CD4-positive, alpha-beta T cell (primary cell): ENCODE measurements at regions of chr11 and their contacts with region 1.

Region 1: DNA sequence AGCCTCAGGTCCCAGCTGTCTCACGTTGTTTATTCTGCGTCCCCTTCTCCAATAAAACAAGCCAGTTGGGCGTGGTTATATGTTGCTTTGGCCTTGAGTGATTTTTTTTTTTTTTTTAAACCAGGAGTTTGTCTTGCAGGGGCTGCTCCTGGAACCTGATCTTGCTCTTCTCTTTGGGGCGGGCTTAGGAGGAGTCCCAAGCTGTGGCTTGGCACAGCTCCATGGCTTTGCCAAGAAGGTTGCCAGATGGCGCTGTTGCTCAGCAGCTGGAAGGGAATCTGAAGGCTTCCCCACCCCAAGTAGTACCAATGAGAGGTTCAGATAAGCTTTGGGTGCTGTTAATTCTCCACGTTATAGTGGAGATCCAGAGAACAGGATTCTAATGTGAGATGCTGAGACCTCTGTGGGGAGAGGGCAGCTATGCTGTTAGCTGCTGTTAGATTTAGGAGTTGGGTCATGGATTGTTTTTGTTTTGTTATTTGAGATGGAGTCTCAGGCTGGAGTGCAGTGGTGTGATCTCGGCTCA is 2.0 kb upstream of the FERMT3 start:
- DNase-seq: peak; percentile 77 to 95 (median 84)
- ATAC-seq: peak; percentile 63
- H3K4me3 ChIP-seq: no peak overlapping the region
- H3K4me3 Mint-ChIP-seq: peak overlapping the region; percentile 93
- H3K27ac ChIP-seq: no peak overlapping the region
- H3K27ac Mint-ChIP-seq: peak overlapping the region; percentile 78
- H3K4me1 ChIP-seq: peaks cover 50% of the 10 kb centered on the region
- H3K4me1 Mint-ChIP-seq: peaks cover 49% of the 10 kb centered on the region
- H3K27me3 ChIP-seq: no peaks in the 10 kb centered on the region
- H3K27me3 Mint-ChIP-seq: no peaks in the 10 kb centered on the region
- CTCF ChIP-seq: peak; percentile 69

Region 2: GRCh38 chr11:64216879-64217278 is 12.4 kb after region 1 on chr11:
- CTCF ChIA-PET with region 1: interaction called, 4 read pairs
- POLR2A ChIA-PET with region 1: interaction called, 116 read pairs
- intact Hi-C with region 1: no loop called
- DNase-seq: no peak
- ATAC-seq: no peak
- H3K4me3 ChIP-seq: no peak overlapping the region
- H3K4me3 Mint-ChIP-seq: no peak overlapping the region
- H3K27ac ChIP-seq: no peak overlapping the region
- H3K27ac Mint-ChIP-seq: no peak overlapping the region
- H3K4me1 ChIP-seq: peaks cover 2% of the 10 kb centered on the region
- H3K4me1 Mint-ChIP-seq: peaks cover 8% of the 10 kb centered on the region
- H3K27me3 ChIP-seq: no peaks in the 10 kb centered on the region
- H3K27me3 Mint-ChIP-seq: no peaks in the 10 kb centered on the region
- CTCF ChIP-seq: no peak

Region 3: DNA sequence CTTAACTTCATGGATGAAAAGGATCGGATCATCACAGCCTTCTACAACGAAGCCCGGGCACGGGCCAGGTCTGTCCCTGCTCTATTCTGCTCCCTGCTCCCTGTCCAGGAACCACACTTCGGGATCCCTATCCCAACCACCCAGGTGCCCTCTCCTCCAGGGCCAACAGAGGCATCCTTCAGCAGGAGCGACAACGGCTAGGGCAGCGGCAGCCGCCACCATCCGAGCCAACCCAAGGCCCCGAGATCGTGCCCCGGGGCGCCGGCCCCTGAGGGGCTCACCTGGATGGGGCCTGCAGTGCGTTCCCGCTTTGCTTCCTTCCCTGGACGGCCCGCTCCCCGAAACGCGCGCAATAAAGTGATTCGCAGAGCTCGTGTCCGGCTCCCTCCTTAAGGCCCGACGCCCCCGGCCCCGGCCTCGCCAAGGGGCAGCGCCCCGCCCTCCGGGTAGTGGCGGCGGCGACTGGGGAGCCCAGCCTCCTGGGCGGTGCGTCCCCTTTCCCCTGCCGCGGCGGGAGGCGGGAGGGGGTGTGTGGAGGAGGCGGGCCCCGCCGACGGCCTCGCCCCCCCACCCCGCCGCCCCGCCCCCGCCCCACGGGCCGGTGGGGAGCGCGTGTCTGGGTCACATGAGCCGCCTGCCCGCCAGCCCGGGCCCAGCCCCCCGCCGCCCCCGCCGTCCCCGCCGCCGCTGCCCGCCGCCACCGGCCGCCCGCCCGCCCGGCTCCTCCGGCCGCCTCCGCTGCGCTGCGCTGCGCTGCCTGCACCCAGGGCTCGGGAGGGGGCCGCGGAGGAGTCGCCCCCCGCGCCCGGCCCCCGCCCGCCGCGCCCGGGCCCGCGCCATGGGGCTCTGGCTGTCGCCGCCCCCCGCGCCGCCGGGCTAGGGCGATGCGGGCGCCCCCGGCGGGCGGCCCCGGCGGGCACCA is 29.6 kb after region 1 on chr11 and contains the start of gene VEGFB:
- CTCF ChIA-PET with region 1: interaction called, 7 read pairs
- POLR2A ChIA-PET with region 1: interaction called, 31 read pairs
- intact Hi-C with region 1: no loop called
- DNase-seq: peak; percentile 49 to 86 (median 74)
- ATAC-seq: peak; percentile 43
- H3K4me3 ChIP-seq: peak within 1 kb of the TSS; percentile 65
- H3K4me3 Mint-ChIP-seq: peak within 1 kb of the TSS; percentile 95
- H3K27ac ChIP-seq: peak within 1 kb of the TSS; percentile 58 to 64
- H3K27ac Mint-ChIP-seq: peak within 1 kb of the TSS; percentile 94
- H3K4me1 ChIP-seq: peaks cover 67% of the 10 kb centered on the region
- H3K4me1 Mint-ChIP-seq: peaks cover 50% of the 10 kb centered on the region
- H3K27me3 ChIP-seq: no peaks in the 10 kb centered on the region
- H3K27me3 Mint-ChIP-seq: no peaks in the 10 kb centered on the region
- CTCF ChIP-seq: no peak
- total RNA-seq, gene VEGFB: 39.7 to 48.7 TPM

Region 4: GRCh38 chr11:64246871-64247728 is 42.6 kb after region 1 on chr11 and contains the start of gene PPP1R14B:
- CTCF ChIA-PET with region 1: interaction called, 56 read pairs
- POLR2A ChIA-PET with region 1: interaction called, 65 read pairs
- intact Hi-C with region 1: loop called (anchors 1 to 5 kb)
- DNase-seq: peak; percentile 60 to 89 (median 76)
- ATAC-seq: peak; percentile 63
- H3K4me3 ChIP-seq: peak within 1 kb of the TSS; percentile 90
- H3K4me3 Mint-ChIP-seq: peak within 1 kb of the TSS; percentile 94
- H3K27ac ChIP-seq: peak within 1 kb of the TSS; percentile 48 to 57
- H3K27ac Mint-ChIP-seq: peak within 1 kb of the TSS; percentile 82
- H3K4me1 ChIP-seq: peaks cover 61% of the 10 kb centered on the region
- H3K4me1 Mint-ChIP-seq: peaks cover 41% of the 10 kb centered on the region
- H3K27me3 ChIP-seq: no peaks in the 10 kb centered on the region
- H3K27me3 Mint-ChIP-seq: no peaks in the 10 kb centered on the region
- CTCF ChIP-seq: no peak
- total RNA-seq, gene PPP1R14B: 17.1 to 21.0 TPM

Region 5: GRCh38 chr11:64553551-64554201 is 349.1 kb after region 1 on chr11:
- CTCF ChIA-PET with region 1: no interaction called
- POLR2A ChIA-PET with region 1: no interaction called
- intact Hi-C with region 1: no loop called
- DNase-seq: peak; percentile 27 to 71 (median 46)
- ATAC-seq: peak; percentile 48
- H3K4me3 ChIP-seq: no peak overlapping the region
- H3K4me3 Mint-ChIP-seq: no peak overlapping the region
- H3K27ac ChIP-seq: no peak overlapping the region
- H3K27ac Mint-ChIP-seq: no peak overlapping the region
- H3K4me1 ChIP-seq: no peaks in the 10 kb centered on the region
- H3K4me1 Mint-ChIP-seq: no peaks in the 10 kb centered on the region
- H3K27me3 ChIP-seq: no peaks in the 10 kb centered on the region
- H3K27me3 Mint-ChIP-seq: no peaks in the 10 kb centered on the region
- CTCF ChIP-seq: peak; percentile 93